ENCODE measurements at regions of chr22 and their contacts with region 1.

Region 1: GRCh38 chr22:38872172-38872830 is at the start of gene CBX6:
- DNase-seq: peak; percentile 98
- total RNA-seq, gene CBX6: 60.3 TPM

Region 2: GRCh38 chr22:38766076-38766777 is 106.1 kb before region 1 on chr22:
- intact Hi-C with region 1: loop called (anchors 5 kb)
- DNase-seq: no peak

Region 3: DNA sequence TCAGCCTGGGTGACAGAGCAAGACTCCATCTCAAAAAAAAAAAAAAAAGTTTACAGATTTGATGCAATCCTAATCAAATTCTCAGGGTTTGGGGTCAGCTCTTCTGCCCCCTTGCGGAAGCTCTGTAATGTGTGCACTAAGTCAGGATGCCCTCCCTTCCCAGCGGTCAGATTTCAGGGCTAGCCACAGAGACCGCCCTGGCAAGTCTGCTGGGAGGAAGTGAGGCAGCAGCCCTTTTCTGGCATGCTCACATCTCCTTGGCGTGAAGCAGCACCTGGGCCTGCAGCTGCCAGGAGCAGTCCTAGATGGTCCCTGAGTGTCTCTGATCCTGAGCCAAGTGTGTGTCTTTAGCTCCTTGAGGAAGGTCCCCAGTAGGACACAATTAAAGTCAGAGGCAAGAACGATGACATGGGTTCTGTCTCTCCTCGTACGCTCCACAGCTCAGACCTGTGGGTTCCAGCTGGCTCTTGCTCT is 130.9 kb after region 1 on chr22:
- intact Hi-C with region 1: loop called (anchors 2 kb)
- DNase-seq: peak; percentile 84

Region 4: DNA sequence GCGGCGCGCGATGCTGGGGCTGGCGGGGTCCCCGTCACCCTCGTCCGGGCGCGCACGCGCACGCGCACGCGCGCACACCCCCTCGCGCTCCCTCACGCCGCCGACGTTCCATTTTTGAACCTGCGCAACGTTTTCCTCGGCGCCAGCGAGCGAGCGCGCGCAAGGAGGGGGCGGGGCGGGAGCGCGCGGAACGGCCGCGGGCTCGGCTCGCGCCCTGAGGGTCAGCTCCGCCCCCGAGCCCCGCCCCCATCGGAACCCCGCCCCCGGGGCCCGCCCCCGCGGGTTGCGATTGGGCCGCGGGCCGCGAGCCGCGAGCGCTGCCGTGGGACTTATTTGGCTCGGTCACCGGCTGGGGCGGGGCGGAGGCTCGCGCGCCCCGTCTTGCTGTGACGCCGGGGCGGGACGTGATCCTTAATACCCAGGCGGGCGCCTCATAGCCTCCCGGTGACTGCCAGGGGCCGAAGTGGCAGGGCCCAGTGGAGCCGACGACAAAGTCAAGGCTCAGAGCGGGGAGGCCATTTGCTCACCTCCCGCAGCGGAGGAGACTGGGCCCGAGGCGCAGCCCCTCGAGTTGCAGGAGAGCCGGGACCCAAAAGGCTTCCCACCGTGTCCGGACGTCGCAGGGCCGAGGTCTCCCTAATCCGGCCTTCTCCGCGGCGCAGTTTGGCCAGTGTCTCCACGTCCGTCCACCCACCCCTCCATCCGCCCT is 280.4 kb after region 1 on chr22 and contains the start of gene CBX7:
- intact Hi-C with region 1: loop called (anchors 2 kb)
- DNase-seq: peak; percentile 97
- total RNA-seq, gene CBX7: 89.6 TPM

Region 5: DNA sequence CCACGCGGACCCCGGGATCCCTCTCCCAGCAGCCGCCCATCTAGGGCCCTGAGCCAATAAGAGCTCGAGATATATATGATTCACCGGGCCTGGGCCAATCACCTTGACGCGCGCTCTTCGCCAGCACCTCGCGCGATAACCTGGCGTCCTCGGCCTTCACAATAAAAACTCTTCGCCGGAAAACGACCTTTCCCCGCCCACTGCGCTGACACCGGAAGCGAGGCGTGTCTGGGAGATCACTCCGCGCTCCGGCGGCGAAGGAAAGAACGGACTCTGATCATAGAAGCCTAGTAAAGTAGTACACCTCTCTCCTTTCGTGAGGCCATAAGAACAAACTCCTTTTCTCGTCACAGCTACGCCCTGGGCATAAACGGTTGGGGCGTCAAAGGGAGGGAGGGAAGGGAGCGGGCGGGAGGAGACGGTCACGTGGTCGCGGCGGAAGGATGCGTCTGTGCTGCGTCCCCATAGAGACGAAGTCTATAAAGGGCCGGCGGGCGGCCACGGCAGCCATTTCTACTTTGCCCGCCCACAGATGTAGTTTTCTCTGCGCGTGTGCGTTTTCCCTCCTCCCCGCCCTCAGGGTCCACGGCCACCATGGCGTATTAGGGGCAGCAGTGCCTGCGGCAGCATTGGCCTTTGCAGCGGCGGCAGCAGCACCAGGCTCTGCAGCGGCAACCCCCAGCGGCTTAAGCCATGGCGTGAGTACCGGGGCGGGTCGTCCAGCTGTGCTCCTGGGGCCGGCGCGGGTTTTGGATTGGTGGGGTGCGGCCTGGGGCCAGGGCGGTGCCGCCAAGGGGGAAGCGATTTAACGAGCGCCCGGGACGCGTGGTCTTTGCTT is 648.0 kb after region 1 on chr22 and contains the start of gene ATF4:
- intact Hi-C with region 1: loop called (anchors 10 kb)
- DNase-seq: peak; percentile 98
- total RNA-seq, gene ATF4: 177 TPM

Measured in cardiac septum (tissue), 1 donor.